Natural killer cell (primary cell): ENCODE measurements at regions of chr11 and their contacts with region 1.

Region 1: DNA sequence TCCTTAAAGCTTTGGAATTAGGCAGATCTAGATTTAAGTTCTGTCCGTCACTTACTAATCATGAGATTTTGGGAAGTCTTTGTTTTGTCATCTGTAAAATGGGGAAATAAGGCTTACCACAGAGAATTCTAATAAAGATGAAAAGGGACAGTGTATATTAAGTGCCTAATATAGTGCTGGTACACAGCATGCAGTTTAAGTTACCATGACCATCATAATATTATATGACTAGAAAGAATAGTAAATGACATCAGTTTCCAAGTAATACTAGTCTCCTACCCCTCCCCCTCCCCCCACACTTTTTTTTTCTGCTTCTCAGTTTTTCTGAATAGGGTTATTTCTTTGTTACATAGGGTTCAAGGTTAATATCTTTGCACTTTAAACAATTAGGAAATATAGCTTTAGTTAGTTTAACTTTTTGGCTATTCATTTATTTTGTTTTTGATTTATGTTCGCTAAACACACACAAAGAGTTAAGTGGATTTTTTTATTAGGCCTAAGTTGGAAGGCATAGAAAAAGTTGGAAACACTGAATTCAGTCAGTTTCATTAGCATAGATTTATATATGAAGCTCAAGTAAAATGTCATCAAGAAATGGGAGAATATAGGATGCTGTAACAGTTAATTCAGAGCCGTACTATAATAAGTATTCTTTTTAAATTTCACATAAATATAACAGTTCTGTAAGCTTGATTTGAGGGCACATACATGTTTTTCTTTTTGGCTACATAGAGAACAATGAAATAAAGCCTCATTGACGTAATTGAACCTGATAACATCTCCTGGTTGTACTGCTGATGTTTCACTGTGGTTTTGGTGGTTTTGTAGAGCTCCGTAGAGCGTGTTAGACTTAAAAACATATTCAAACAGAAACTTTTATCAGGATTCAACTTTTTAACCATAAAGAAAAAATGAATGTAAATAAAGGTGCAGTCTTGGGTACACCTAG is 121.2 kb downstream of the PDE3B start:
- DNase-seq: peak in 1 of 2 donors; percentile 94
- ATAC-seq: peak; percentile 84 to 99 (median 94)
- H3K4me3 ChIP-seq: no peak overlapping the region
- H3K4me3 Mint-ChIP-seq: peak overlapping the region; percentile 61
- H3K27ac ChIP-seq: peak overlapping the region; percentile 57
- H3K27ac Mint-ChIP-seq: peak overlapping the region; percentile 69 to 75
- H3K4me1 ChIP-seq: no peaks in the 10 kb centered on the region
- H3K4me1 Mint-ChIP-seq: peaks cover 8 to 12% of the 10 kb centered on the region in 2 donors
- H3K27me3 ChIP-seq: no peaks in the 10 kb centered on the region
- H3K27me3 Mint-ChIP-seq: no peaks in the 10 kb centered on the region
- CTCF ChIP-seq: no peak

Region 2: DNA sequence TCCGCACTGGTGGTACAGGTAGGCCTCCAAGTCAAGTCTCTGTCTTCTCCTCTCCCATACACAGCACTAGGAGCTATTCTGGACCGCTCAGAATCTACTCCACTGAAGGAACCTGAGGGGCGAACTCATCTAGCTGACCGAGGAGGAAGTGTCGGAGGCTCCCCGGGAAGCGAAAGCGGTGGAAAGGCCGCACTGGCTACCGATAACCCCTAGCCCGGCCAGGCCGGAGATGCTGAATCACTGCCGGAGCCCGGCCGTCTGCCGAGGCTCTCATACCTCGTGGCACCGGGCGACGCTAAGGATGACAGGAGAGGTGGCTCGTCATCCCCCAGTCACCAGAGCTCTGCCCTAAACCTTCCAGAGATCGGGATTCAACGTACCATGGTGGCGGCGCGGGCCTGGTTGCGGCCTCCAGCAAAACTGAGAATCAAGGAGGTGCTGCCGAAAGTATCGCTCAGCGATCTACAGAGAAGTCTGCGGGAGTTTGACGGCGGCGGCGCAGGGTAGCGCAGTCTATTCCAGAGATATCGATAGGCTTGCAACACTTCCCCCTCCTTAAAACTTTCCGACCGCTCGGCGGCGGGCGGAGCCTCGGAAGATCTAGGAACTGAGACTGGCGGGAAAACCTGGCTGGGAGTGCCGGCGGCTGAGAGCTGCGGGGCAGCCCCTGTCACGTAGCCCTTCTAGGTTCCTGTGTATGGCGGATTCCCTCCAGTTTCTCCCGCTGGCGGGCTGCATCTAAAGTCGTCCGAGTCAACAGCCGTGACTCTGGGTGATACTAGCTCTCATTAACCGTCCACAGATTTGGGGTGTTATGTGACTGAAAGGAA is 244.7 kb before region 1 on chr11 and contains the start of gene PSMA1:
- intact Hi-C with region 1: loop called (anchors 5 kb)
- DNase-seq: peak; percentile 86 to 94
- ATAC-seq: peak; percentile 90 to 98 (median 94)
- H3K4me3 ChIP-seq: peak within 1 kb of the TSS; percentile 77
- H3K4me3 Mint-ChIP-seq: peak within 1 kb of the TSS; percentile 97
- H3K27ac ChIP-seq: peak within 1 kb of the TSS; percentile 87
- H3K27ac Mint-ChIP-seq: peak within 1 kb of the TSS; percentile 95 to 97
- H3K4me1 ChIP-seq: peaks cover 6% of the 10 kb centered on the region
- H3K4me1 Mint-ChIP-seq: peaks cover 26 to 28% of the 10 kb centered on the region in 2 donors
- H3K27me3 ChIP-seq: no peaks in the 10 kb centered on the region
- H3K27me3 Mint-ChIP-seq: no peaks in the 10 kb centered on the region
- CTCF ChIP-seq: no peak
- total RNA-seq, gene PSMA1: 143 to 176 (median 155) TPM

Region 3: GRCh38 chr11:14578541-14578956 is 186.3 kb before region 1 on chr11:
- intact Hi-C with region 1: loop called (anchors 1 kb)
- DNase-seq: peak; percentile 45 to 97
- ATAC-seq: peak; percentile 90 to 99 (median 99)
- H3K4me3 ChIP-seq: no peak overlapping the region
- H3K4me3 Mint-ChIP-seq: peak overlapping the region; percentile 78
- H3K27ac ChIP-seq: peak overlapping the region; percentile 96
- H3K27ac Mint-ChIP-seq: peak overlapping the region; percentile 85 to 98
- H3K4me1 ChIP-seq: peaks cover 22% of the 10 kb centered on the region
- H3K4me1 Mint-ChIP-seq: peaks cover 49 to 51% of the 10 kb centered on the region in 2 donors
- H3K27me3 ChIP-seq: no peaks in the 10 kb centered on the region
- H3K27me3 Mint-ChIP-seq: no peaks in the 10 kb centered on the region
- CTCF ChIP-seq: no peak

Region 4: DNA sequence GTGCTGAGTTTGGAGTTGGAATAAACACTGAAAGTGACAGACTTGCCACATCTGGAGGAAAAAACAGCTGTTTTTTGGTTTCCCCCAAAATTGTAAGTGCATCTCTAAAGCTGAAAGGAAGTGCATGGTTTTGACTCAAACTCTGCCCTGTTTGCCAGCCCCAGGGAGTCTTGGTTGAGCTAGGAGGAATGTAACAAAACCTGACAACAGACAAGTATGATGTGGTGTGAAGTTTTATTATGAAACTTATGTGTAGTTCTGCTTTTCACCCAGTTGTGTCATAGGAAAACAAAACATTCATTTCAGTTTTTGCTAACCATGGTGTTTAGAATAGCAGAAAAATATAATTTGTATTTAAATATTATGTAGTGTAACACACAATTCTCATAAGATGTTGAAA is 152.9 kb before region 1 on chr11:
- intact Hi-C with region 1: no loop called
- DNase-seq: no peak
- ATAC-seq: no peak
- H3K4me3 ChIP-seq: no peak overlapping the region
- H3K4me3 Mint-ChIP-seq: no peak overlapping the region
- H3K27ac ChIP-seq: no peak overlapping the region
- H3K27ac Mint-ChIP-seq: peak overlapping the region in 1 of 2 donors; percentile 44
- H3K4me1 ChIP-seq: no peaks in the 10 kb centered on the region
- H3K4me1 Mint-ChIP-seq: peaks cover 0 to 5% of the 10 kb centered on the region in 2 donors
- H3K27me3 ChIP-seq: no peaks in the 10 kb centered on the region
- H3K27me3 Mint-ChIP-seq: no peaks in the 10 kb centered on the region
- CTCF ChIP-seq: no peak

Region 5: GRCh38 chr11:14713496-14714244 is 51.2 kb before region 1 on chr11:
- intact Hi-C with region 1: loop called (anchors 5 kb)
- DNase-seq: peak in 1 of 2 donors; percentile 77
- ATAC-seq: peak; percentile 73 to 88 (median 80)
- H3K4me3 ChIP-seq: no peak overlapping the region
- H3K4me3 Mint-ChIP-seq: peak overlapping the region; percentile 18
- H3K27ac ChIP-seq: no peak overlapping the region
- H3K27ac Mint-ChIP-seq: peak overlapping the region; percentile 29 to 74
- H3K4me1 ChIP-seq: peaks cover 3% of the 10 kb centered on the region
- H3K4me1 Mint-ChIP-seq: peaks cover 9 to 14% of the 10 kb centered on the region in 2 donors
- H3K27me3 ChIP-seq: no peaks in the 10 kb centered on the region
- H3K27me3 Mint-ChIP-seq: no peaks in the 10 kb centered on the region
- CTCF ChIP-seq: no peak

Region 6: GRCh38 chr11:14727215-14727614 is 37.6 kb before region 1 on chr11:
- intact Hi-C with region 1: no loop called
- DNase-seq: no peak
- ATAC-seq: no peak
- H3K4me3 ChIP-seq: no peak overlapping the region
- H3K4me3 Mint-ChIP-seq: no peak overlapping the region
- H3K27ac ChIP-seq: no peak overlapping the region
- H3K27ac Mint-ChIP-seq: no peak overlapping the region
- H3K4me1 ChIP-seq: no peaks in the 10 kb centered on the region
- H3K4me1 Mint-ChIP-seq: peaks cover 5 to 24% of the 10 kb centered on the region in 2 donors
- H3K27me3 ChIP-seq: no peaks in the 10 kb centered on the region
- H3K27me3 Mint-ChIP-seq: peaks cover 0 to 13% of the 10 kb centered on the region in 2 donors
- CTCF ChIP-seq: no peak

Region 7: GRCh38 chr11:14751975-14752407 is 12.9 kb before region 1 on chr11:
- intact Hi-C with region 1: no loop called
- DNase-seq: no peak
- ATAC-seq: no peak
- H3K4me3 ChIP-seq: no peak overlapping the region
- H3K4me3 Mint-ChIP-seq: no peak overlapping the region
- H3K27ac ChIP-seq: no peak overlapping the region
- H3K27ac Mint-ChIP-seq: peak overlapping the region in 1 of 2 donors; percentile 21
- H3K4me1 ChIP-seq: no peaks in the 10 kb centered on the region
- H3K4me1 Mint-ChIP-seq: peaks cover 10 to 28% of the 10 kb centered on the region in 2 donors
- H3K27me3 ChIP-seq: no peaks in the 10 kb centered on the region
- H3K27me3 Mint-ChIP-seq: peaks cover 0 to 8% of the 10 kb centered on the region in 2 donors
- CTCF ChIP-seq: no peak

Region 8: DNA sequence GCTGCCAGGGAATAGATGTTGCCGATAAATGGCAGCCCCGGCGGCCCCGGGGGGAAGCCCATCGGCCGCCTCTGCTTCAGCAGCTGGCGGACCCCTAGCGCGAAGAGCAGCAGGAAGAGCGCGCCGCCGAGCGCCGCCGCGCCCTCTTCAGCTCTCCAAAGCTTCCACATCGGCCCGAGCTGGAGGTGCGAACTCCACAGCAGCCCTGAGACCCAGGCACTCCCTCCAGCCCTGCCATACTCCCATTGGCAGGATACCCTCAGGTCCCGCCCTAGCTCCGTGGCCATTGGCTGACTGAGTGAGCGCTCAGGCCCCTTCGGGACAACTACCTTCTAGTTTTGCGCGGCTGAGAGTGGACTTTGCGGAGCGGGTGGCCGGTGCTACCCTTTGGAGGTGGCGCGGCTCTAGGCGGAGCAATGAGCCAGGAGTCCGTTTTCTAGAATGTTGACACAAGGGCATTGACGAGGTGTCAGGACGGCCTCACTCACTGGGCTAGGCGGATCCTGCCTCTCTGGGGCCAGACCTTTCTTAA is 127.2 kb after region 1 on chr11 and contains the start of gene CYP2R1:
- intact Hi-C with region 1: loop called (anchors 2 kb)
- DNase-seq: peak; percentile 90 to 94
- ATAC-seq: peak; percentile 79 to 94 (median 86)
- H3K4me3 ChIP-seq: peak within 1 kb of the TSS; percentile 87
- H3K4me3 Mint-ChIP-seq: peak within 1 kb of the TSS; percentile 96
- H3K27ac ChIP-seq: peak within 1 kb of the TSS; percentile 92
- H3K27ac Mint-ChIP-seq: peak within 1 kb of the TSS; percentile 95 to 98
- H3K4me1 ChIP-seq: peaks cover 11% of the 10 kb centered on the region
- H3K4me1 Mint-ChIP-seq: peaks cover 22 to 40% of the 10 kb centered on the region in 2 donors
- H3K27me3 ChIP-seq: no peaks in the 10 kb centered on the region
- H3K27me3 Mint-ChIP-seq: no peaks in the 10 kb centered on the region
- CTCF ChIP-seq: no peak
- total RNA-seq, gene CYP2R1: 14.9 to 20.3 (median 16.2) TPM

Region 9: GRCh38 chr11:15062599-15062998 is 297.7 kb after region 1 on chr11:
- intact Hi-C with region 1: no loop called
- DNase-seq: no peak
- ATAC-seq: no peak
- H3K4me3 ChIP-seq: no peak overlapping the region
- H3K4me3 Mint-ChIP-seq: no peak overlapping the region
- H3K27ac ChIP-seq: no peak overlapping the region
- H3K27ac Mint-ChIP-seq: no peak overlapping the region
- H3K4me1 ChIP-seq: no peaks in the 10 kb centered on the region
- H3K4me1 Mint-ChIP-seq: no peaks in the 10 kb centered on the region
- H3K27me3 ChIP-seq: no peaks in the 10 kb centered on the region
- H3K27me3 Mint-ChIP-seq: peaks cover 17 to 55% of the 10 kb centered on the region in 2 donors
- CTCF ChIP-seq: no peak